Heart right ventricle (tissue), 16 donors: ENCODE measurements at regions of chr9 and their contacts with region 1.

Region 1: GRCh38 chr9:15211160-15211814 is 95.7 kb downstream of the TTC39B start:
- DNase-seq: peak in 1 of 2 donors; percentile 81
- ATAC-seq: peak in 7 of 8 donors; percentile 55 to 83 (median 65)
- H3K4me3 ChIP-seq: no peak overlapping the region
- H3K27ac ChIP-seq: peak overlapping the region in 1 of 10 donors; percentile 22
- H3K4me1 ChIP-seq: peaks cover 0 to 10% (median 7%) of the 10 kb centered on the region in 9 donors
- H3K27me3 ChIP-seq: no peaks in the 10 kb centered on the region
- CTCF ChIP-seq: peak; percentile 80 to 96 (median 92)

Region 2: GRCh38 chr9:14923696-14924095 is 287.6 kb before region 1 on chr9:
- intact Hi-C with region 1: no loop called
- DNase-seq: no peak
- ATAC-seq: no peak
- H3K4me3 ChIP-seq: no peak overlapping the region
- H3K27ac ChIP-seq: no peak overlapping the region
- H3K4me1 ChIP-seq: no peaks in the 10 kb centered on the region
- H3K27me3 ChIP-seq: no peaks in the 10 kb centered on the region
- CTCF ChIP-seq: no peak

Region 3: DNA sequence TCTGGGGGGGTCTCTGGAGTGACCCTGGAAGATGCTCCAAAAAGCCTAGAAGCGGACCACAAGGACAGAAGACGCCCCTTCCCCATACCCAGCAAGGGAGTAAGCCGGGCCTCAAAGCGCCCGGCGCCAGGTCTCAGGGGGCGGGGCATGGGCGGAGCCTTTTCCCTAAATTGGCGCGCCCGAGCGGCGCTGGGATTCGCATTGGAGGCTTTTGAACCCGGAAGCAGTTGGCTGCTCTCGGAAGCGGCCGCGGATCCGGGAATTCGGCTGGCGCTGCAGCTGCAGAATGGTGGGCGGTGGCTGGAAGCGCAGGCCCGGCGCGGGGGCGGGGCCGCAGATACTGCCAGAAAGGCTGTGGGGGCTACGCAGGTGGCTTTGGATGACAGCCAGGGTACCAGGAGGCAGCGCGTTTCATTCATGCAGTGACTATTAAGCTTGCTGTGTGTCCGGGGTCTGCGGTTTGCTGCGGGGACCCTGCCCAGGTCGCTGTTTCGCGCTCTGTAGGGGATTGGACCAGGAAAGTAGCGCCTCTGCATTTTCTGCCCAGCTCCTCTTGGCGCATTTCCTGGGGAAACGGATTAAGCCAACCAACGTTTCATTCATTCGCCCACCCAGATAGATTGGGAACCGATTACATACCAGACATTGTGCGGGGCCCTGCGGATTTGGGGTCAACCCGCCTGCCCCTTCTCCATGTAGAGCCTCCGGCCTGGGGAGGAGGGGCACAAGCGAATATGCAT is 218.1 kb before region 1 on chr9:
- intact Hi-C with region 1: no loop called
- DNase-seq: peak; percentile 88 to 89
- ATAC-seq: peak; percentile 95 to 99 (median 98)
- H3K4me3 ChIP-seq: peak overlapping the region; percentile 33 to 72 (median 60)
- H3K27ac ChIP-seq: peak overlapping the region in 8 of 10 donors; percentile 42 to 75 (median 66)
- H3K4me1 ChIP-seq: peaks cover 0 to 26% (median 6%) of the 10 kb centered on the region in 9 donors
- H3K27me3 ChIP-seq: no peaks in the 10 kb centered on the region
- CTCF ChIP-seq: no peak

Region 4: DNA sequence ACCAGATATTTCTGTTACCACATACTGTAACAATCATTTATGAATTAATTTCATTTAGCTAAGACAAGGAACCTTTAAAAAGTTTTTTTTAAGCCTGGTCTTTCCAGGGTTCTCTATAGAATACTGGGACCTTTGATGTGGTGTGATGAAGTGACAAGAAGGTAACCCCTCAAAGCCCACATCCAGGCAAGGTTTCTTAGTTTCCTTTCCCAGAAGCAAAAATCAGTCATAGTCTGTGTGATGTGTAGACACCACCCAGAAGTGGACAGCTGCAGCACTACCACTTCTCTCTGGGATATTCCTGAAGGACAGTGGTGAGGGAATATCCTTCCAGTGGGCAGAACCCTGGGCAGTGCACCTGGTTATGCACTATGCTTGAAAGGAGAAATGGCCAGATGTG is 19.9 kb before region 1 on chr9:
- intact Hi-C with region 1: no loop called
- DNase-seq: no peak
- ATAC-seq: no peak
- H3K4me3 ChIP-seq: no peak overlapping the region
- H3K27ac ChIP-seq: no peak overlapping the region
- H3K4me1 ChIP-seq: no peaks in the 10 kb centered on the region
- H3K27me3 ChIP-seq: no peaks in the 10 kb centered on the region
- CTCF ChIP-seq: no peak

Region 5: DNA sequence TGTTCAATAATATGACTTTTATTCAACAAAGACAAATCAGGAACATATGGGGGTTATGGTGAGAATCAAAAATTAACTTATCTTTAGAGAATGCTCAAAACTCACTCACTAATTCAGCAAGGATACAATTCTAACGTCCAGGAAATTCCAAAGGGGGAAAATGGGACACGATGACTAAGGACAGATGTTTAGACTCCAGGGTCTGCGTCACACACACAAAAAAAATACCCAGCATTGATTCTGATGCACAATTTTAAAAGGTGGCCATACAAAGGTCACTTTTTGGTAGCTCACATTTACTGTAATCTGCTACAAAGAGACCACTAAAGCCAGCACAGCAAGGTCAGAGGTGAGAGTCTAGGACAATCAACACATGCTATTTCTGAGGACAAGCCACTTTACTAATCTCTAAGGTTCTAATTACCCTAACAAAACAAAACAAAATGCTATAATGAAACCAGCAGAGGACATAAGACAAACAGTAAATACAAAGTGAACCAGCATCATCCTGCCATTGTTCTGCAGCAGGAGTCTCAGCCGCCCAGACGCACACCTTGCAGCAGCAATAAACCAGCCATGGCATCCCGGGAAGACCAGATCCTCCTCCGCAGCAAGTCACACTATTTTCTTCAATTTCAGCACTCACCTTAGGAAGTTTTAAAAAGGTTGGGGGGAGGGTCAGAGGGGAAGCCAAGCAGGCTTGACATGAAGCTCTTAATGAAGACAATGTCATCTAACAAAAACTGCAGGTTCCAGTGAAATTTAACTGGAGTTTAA is 37.9 kb after region 1 on chr9:
- intact Hi-C with region 1: no loop called
- DNase-seq: peak in 1 of 2 donors; percentile 8
- ATAC-seq: peak in 6 of 8 donors; percentile 18 to 78 (median 59)
- H3K4me3 ChIP-seq: no peak overlapping the region
- H3K27ac ChIP-seq: peak overlapping the region in 4 of 10 donors; percentile 23 to 60 (median 48)
- H3K4me1 ChIP-seq: peaks cover 0 to 24% (median 15%) of the 10 kb centered on the region in 9 donors
- H3K27me3 ChIP-seq: no peaks in the 10 kb centered on the region
- CTCF ChIP-seq: no peak

Region 6: DNA sequence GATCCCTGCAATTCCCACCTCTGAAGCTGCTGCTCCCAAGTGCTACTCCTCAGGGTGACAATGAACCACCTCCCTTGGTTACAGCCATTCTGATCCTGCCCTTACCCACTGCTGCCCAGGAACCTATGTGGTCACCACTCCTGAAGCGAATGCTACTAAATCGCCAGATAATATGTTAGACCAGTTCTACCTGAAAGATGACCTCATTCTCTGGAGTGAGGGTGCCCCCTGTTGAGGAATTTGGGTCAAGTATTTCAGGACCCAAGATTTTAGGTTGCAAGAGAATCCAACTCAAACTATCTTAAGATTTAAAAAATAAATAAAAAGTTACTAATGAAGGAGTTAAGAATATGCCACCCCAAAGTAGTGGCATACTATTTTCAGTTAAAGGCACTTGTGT is 205.6 kb after region 1 on chr9:
- intact Hi-C with region 1: loop called in 7 of 10 experiments (anchors 5 to 10 kb)
- DNase-seq: no peak
- ATAC-seq: peak in 1 of 8 donors; percentile 49
- H3K4me3 ChIP-seq: no peak overlapping the region
- H3K27ac ChIP-seq: no peak overlapping the region
- H3K4me1 ChIP-seq: peaks cover 0 to 4% (median under 1%) of the 10 kb centered on the region in 9 donors
- H3K27me3 ChIP-seq: no peaks in the 10 kb centered on the region
- CTCF ChIP-seq: peak in 7 of 9 donors; percentile 18 to 50 (median 44)

Region 7: DNA sequence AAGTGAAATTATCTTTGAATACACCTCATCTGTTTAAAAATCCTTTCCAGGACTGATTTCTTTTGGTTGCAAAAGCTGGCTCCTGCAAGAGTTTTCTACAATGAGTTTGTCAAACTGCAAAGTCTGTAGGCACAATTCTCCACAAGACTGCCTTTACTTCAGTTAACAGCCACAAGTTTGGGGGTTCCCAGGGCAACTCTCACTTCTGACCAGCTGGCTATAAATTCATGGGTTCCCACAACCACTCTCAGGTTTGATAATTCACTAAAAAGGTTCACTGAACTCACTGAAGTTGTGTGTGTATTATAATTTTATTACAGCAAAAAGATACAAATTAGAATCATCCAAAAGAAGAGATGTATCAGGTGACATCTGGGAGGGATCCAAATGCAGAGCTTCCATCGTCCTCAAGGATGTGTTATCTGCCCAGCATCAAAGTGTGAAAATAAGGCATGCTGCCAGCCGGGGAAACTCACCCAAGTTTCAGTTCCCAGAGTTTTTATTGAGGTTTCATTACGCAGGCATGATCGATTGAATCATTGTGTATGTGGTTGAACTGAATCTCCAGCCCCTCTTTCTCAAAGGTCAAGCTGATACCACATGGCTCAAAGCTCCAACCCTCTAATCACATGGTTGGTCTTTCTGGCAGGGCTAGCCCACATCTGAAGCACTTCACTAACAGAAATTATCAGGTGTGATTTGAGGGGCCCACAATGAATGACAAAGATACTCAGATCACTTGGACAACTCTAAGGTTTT is 318.5 kb after region 1 on chr9:
- intact Hi-C with region 1: loop called in 1 of 10 experiments (anchors 5 kb)
- DNase-seq: no peak
- ATAC-seq: no peak
- H3K4me3 ChIP-seq: no peak overlapping the region
- H3K27ac ChIP-seq: no peak overlapping the region
- H3K4me1 ChIP-seq: no peaks in the 10 kb centered on the region
- H3K27me3 ChIP-seq: no peaks in the 10 kb centered on the region
- CTCF ChIP-seq: no peak